ENCODE measurements at regions of chr2 and their contacts with region 1.

Region 1: DNA sequence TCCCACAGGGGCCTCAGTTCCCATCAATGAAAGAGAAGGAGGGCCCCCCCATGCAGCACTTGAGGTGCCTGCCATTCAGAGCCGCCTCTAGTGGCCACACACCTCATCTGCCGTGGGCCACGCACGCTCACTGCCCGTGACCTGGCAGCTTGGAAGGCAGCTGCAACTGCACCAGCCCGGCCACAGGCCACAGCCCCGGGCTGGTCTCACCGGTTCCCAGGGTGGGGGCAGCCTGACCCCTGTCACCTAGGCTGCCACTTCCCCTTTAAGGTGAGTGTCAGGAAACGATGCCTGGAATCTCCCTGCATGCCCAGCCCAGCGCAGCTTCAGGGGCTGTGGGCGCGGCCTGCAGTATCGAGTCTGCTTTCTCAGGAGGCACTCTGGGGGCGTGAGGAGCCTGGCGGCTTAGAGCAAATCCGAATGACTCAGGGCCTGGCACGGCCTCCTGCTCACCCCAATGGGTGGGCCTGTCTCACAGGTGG is 2.6 kb downstream of the MAB21L4 start:
- DNase-seq: peak; percentile 75 to 84
- H3K4me3 ChIP-seq: peak overlapping the region; percentile 61
- H3K4me3 Mint-ChIP-seq: peak overlapping the region; percentile 81
- H3K27ac Mint-ChIP-seq: peak overlapping the region; percentile 85
- H3K4me1 ChIP-seq: peaks cover 33% of the 10 kb centered on the region
- H3K4me1 Mint-ChIP-seq: peaks cover 13% of the 10 kb centered on the region
- H3K27me3 ChIP-seq: no peaks in the 10 kb centered on the region
- H3K27me3 Mint-ChIP-seq: no peaks in the 10 kb centered on the region
- CTCF ChIP-seq: peak in 1 of 2 experiments; percentile 3

Region 2: DNA sequence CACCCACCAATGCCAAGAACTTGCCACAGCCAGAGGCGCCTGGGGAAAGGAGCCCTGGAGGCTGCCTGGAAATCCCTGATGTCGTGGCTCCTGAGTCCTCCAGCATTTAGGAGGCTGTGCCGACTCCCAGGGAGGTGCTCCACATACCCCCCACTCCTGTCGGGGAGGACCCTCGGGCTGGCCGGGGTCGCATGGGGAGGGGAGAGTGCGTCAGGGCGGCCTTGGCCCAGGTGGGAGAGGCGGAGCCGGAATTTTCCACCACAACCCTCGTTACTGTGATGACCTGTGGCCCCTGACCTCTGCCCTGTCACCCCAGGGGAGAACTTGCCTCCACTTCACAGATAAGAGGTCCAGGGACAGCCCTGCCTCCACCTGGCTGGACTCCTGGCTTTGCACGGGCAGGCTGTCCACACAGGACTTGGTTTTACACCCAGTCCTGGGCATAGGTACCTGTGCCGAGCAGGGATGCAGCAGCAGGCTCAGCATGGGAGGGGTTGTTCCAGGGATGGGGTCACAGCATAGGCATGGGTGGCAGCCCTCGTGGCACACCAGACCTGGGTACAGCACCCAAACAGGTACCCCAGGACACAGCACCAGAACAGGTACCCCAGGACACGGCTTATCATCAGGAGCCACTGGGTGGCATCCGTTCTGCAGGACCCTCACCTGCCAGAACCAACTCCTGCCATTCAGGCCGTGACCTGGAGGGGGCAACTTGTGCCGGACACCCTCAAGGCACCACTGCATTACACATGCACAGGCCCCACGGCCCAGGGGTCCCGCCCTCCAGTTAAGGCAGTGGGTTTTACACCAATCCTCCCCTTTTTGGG is 37.0 kb before region 1 on chr2:
- CTCF ChIA-PET with region 1: interaction called, 12 read pairs
- POLR2A ChIA-PET with region 1: interaction called, 10 read pairs
- intact Hi-C with region 1: loop called (anchors 1 kb)
- DNase-seq: peak in 1 of 2 experiments; percentile 34
- H3K4me3 ChIP-seq: no peak overlapping the region
- H3K4me3 Mint-ChIP-seq: no peak overlapping the region
- H3K27ac Mint-ChIP-seq: no peak overlapping the region
- H3K4me1 ChIP-seq: peaks cover 17% of the 10 kb centered on the region
- H3K4me1 Mint-ChIP-seq: peaks cover 9% of the 10 kb centered on the region
- H3K27me3 ChIP-seq: no peaks in the 10 kb centered on the region
- H3K27me3 Mint-ChIP-seq: no peaks in the 10 kb centered on the region
- CTCF ChIP-seq: peak in 1 of 2 experiments; percentile 29

Region 3: DNA sequence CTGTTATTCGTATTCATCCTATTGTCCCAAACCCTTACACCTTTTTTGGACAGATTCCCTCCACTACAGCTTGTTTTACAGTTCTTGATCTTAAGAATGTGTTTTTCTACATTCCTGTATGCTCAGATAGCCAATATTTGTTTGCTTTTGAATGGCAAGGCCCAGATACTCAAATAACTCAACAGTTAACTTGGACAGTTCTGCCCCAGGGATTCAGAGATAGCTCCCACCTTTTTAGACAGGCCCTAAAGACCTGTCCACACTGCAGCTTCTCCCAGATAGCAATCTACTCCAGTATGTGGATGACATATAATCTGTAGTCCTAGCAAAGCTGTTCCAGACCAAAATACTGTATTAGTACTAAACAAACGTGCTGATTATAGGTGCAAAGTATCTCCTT is 31.9 kb before region 1 on chr2:
- CTCF ChIA-PET with region 1: interaction called, 9 read pairs
- POLR2A ChIA-PET with region 1: interaction called, 10 read pairs
- intact Hi-C with region 1: loop called (anchors 1 kb)
- DNase-seq: peak in 1 of 2 experiments; percentile 30
- H3K4me3 ChIP-seq: no peak overlapping the region
- H3K4me3 Mint-ChIP-seq: no peak overlapping the region
- H3K27ac Mint-ChIP-seq: no peak overlapping the region
- H3K4me1 ChIP-seq: peaks cover 25% of the 10 kb centered on the region
- H3K4me1 Mint-ChIP-seq: peaks cover 20% of the 10 kb centered on the region
- H3K27me3 ChIP-seq: no peaks in the 10 kb centered on the region
- H3K27me3 Mint-ChIP-seq: no peaks in the 10 kb centered on the region
- CTCF ChIP-seq: no peak

Region 4: GRCh38 chr2:240873805-240874714 is 19.3 kb before region 1 on chr2:
- CTCF ChIA-PET with region 1: interaction called, 9 read pairs
- POLR2A ChIA-PET with region 1: interaction called, 4 read pairs
- intact Hi-C with region 1: loop called (anchors 1 kb)
- DNase-seq: peak; percentile 82 to 89
- H3K4me3 ChIP-seq: no peak overlapping the region
- H3K4me3 Mint-ChIP-seq: no peak overlapping the region
- H3K27ac Mint-ChIP-seq: peak overlapping the region; percentile 95
- H3K4me1 ChIP-seq: peaks cover 19% of the 10 kb centered on the region
- H3K4me1 Mint-ChIP-seq: no peaks in the 10 kb centered on the region
- H3K27me3 ChIP-seq: no peaks in the 10 kb centered on the region
- H3K27me3 Mint-ChIP-seq: no peaks in the 10 kb centered on the region
- CTCF ChIP-seq: peak in 1 of 2 experiments; percentile 22

Region 5: DNA sequence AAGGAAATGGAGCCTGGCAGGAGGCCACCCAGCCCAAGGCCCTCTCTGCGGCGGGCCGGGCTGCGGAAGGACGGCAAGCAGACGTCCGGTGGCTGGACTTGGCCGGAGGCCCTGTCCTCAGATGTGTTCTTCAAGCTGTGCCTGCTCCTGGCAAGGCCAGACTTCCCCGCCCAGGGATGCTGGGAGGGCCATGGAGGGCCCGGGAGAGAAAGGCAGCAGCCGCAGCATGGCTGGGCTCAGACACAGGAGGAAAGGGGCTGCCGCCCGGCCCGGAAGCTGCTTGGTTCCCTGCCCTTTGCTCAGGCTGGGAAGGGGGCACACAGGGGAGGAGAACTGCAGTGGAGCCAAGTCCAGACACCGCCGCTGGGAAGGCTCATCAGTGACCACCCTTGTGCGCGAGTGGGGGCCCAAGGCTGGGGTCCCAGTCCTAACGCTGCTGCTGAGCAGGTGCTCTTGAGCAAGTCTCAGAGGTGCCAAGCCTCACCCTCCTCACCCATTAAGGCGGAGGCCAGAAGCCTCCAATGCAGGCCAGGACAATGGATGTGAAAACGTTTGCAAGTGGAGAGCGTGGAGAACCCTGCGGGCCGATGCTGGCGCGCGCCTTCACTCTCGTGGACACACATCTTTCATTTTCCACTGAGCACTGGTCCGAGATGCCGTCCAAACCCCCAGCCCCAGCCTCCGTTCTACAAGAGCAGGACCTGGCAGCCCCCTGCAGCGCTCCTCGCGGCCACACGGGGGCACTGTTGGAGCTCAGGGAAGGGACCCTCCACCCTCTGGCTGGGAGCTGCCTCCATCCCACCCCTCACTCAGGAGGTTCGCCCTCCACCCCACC is 20.6 kb after region 1 on chr2:
- CTCF ChIA-PET with region 1: interaction called, 17 read pairs
- POLR2A ChIA-PET with region 1: no interaction called
- intact Hi-C with region 1: no loop called
- DNase-seq: peak; percentile 52 to 72
- H3K4me3 ChIP-seq: no peak overlapping the region
- H3K4me3 Mint-ChIP-seq: no peak overlapping the region
- H3K27ac Mint-ChIP-seq: no peak overlapping the region
- H3K4me1 ChIP-seq: no peaks in the 10 kb centered on the region
- H3K4me1 Mint-ChIP-seq: no peaks in the 10 kb centered on the region
- H3K27me3 ChIP-seq: no peaks in the 10 kb centered on the region
- H3K27me3 Mint-ChIP-seq: peaks cover 6% of the 10 kb centered on the region
- CTCF ChIP-seq: peak; percentile 57 to 71

Region 6: GRCh38 chr2:240983361-240983995 is 90.1 kb after region 1 on chr2:
- CTCF ChIA-PET with region 1: interaction called, 5 read pairs
- POLR2A ChIA-PET with region 1: no interaction called
- intact Hi-C with region 1: loop called (anchors 10 kb)
- DNase-seq: peak in 1 of 2 experiments; percentile 50
- H3K4me3 ChIP-seq: no peak overlapping the region
- H3K4me3 Mint-ChIP-seq: no peak overlapping the region
- H3K27ac Mint-ChIP-seq: no peak overlapping the region
- H3K4me1 ChIP-seq: no peaks in the 10 kb centered on the region
- H3K4me1 Mint-ChIP-seq: no peaks in the 10 kb centered on the region
- H3K27me3 ChIP-seq: no peaks in the 10 kb centered on the region
- H3K27me3 Mint-ChIP-seq: no peaks in the 10 kb centered on the region
- CTCF ChIP-seq: peak; percentile 40 to 60